RWPE1 (cell line): ENCODE measurements at regions of chr10 and their contacts with region 1.

Region 1: GRCh38 chr10:113159563-113159962 is 209.5 kb downstream of the TCF7L2 start:
- DNase-seq: no peak
- H3K27ac ChIP-seq: no peak overlapping the region
- CTCF ChIP-seq: no peak

Region 2: GRCh38 chr10:113555751-113556150 is 396.2 kb after region 1 on chr10:
- CTCF ChIA-PET with region 1: interaction called, 10 read pairs
- POLR2A ChIA-PET with region 1: no interaction called
- DNase-seq: no peak
- H3K27ac ChIP-seq: no peak overlapping the region
- CTCF ChIP-seq: no peak